PC-9 (cell line): ENCODE measurements at regions of chr15 and their contacts with region 1.

Region 1: GRCh38 chr15:42065033-42065432 is 29.3 kb downstream of the PLA2G4D start:
- DNase-seq: no peak
- H3K4me3 ChIP-seq: no peak overlapping the region
- H3K27ac ChIP-seq: no peak overlapping the region
- H3K4me1 ChIP-seq: no peaks in the 10 kb centered on the region
- H3K27me3 ChIP-seq: no peaks in the 10 kb centered on the region
- CTCF ChIP-seq: no peak

Region 2: GRCh38 chr15:41465822-41466421 is 599.1 kb before region 1 on chr15:
- CTCF ChIA-PET with region 1: interaction called, 15 read pairs
- POLR2A ChIA-PET with region 1: no interaction called
- intact Hi-C with region 1: no loop called
- DNase-seq: no peak
- H3K4me3 ChIP-seq: no peak overlapping the region
- H3K27ac ChIP-seq: no peak overlapping the region
- H3K4me1 ChIP-seq: no peaks in the 10 kb centered on the region
- H3K27me3 ChIP-seq: no peaks in the 10 kb centered on the region
- CTCF ChIP-seq: peak; percentile 82

Region 3: GRCh38 chr15:41683955-41684354 is 381.1 kb before region 1 on chr15:
- CTCF ChIA-PET with region 1: no interaction called
- POLR2A ChIA-PET with region 1: no interaction called
- intact Hi-C with region 1: no loop called
- DNase-seq: no peak
- H3K4me3 ChIP-seq: no peak overlapping the region
- H3K27ac ChIP-seq: no peak overlapping the region
- H3K4me1 ChIP-seq: no peaks in the 10 kb centered on the region
- H3K27me3 ChIP-seq: no peaks in the 10 kb centered on the region
- CTCF ChIP-seq: no peak

Region 4: DNA sequence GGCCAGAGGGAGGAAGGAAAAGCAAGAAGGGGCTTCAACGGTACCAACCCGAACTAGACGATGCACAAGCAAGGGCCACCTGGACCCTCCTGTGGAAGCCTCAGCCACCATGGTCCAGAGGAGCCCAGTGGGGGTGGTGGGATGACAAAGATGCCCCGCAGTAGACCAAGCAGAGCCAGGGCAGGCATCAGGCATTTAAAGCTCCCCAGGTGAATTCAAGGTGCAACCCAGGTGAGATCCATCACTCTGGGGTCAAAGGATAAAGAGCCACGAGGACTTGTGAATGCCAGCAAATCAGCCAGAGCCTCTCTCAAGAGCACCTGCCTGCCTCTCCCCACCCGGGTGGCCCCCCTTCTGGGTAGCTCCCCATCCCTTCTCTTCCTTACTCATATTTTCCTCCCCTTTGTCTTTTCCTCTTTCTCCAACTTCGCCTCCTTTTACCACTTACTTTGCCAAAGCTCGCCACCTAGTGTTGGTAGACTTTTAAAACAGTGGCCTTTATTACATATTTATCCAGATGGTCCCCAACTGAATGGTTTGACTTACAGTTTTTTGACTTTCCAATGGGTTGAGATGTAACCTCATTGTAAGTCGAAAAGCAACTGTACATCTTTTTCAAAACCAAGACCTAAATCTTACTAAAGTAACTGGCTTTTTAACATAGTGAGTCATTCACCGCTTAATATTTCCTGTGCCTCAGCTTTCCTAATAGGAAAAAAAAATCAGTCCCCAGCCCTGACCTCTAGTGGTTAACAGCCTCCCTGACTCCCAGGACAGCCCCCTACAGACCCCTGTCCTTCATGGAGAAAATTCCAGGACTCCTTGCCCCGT is 72.6 kb after region 1 on chr15:
- CTCF ChIA-PET with region 1: interaction called, 12 read pairs
- POLR2A ChIA-PET with region 1: no interaction called
- intact Hi-C with region 1: loop called (anchors 1 kb)
- DNase-seq: no peak
- H3K4me3 ChIP-seq: no peak overlapping the region
- H3K27ac ChIP-seq: no peak overlapping the region
- H3K4me1 ChIP-seq: 0 out of 2 replicates have a peak, but pooled peaks cover under 1% of the 10 kb centered on the region
- H3K27me3 ChIP-seq: no peaks in the 10 kb centered on the region
- CTCF ChIP-seq: peak; percentile 70

Region 5: DNA sequence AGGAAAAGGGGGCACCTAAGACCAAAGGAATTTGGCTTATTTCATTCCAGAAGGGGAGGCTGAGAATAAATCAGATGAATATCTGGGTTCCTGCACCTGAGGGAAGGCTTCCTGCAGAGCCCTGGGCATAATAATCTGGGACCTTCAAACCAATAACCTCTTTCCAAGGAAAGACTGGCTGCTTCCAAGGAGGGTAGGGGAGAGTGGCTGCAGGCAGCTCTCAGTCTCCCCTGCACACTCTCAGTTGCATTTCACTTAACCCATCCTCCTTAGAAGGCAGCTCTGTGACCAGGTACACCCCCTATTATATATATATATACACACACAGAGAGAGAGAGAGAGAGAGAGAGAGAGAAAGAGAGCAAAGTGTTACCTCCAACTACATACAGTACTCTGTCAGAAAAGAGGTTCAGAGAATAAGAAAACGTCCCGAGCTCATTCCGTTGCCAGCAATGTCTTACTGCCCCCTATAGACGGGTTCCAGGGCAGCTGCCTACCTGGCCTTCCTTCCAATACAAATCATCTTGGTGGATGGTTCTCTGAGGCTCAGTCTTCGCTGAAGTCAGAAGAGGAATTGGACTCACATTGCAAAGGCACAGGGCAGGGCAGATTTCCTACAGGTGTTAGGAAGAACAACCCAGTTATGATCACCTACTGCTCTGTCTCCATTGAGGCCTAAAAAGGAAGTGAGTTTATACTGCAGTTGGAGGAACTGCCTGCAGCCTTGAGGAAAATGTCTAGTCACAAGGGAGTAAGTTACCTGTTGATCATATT is 320.4 kb after region 1 on chr15:
- CTCF ChIA-PET with region 1: no interaction called
- POLR2A ChIA-PET with region 1: no interaction called
- intact Hi-C with region 1: loop called (anchors 2 kb)
- DNase-seq: peak in 1 of 2 experiments; percentile 44
- H3K4me3 ChIP-seq: no peak overlapping the region
- H3K27ac ChIP-seq: no peak overlapping the region
- H3K4me1 ChIP-seq: no peaks in the 10 kb centered on the region
- H3K27me3 ChIP-seq: no peaks in the 10 kb centered on the region; the same call in 1 of the 2 replicates
- CTCF ChIP-seq: peak; percentile 75

Region 6: DNA sequence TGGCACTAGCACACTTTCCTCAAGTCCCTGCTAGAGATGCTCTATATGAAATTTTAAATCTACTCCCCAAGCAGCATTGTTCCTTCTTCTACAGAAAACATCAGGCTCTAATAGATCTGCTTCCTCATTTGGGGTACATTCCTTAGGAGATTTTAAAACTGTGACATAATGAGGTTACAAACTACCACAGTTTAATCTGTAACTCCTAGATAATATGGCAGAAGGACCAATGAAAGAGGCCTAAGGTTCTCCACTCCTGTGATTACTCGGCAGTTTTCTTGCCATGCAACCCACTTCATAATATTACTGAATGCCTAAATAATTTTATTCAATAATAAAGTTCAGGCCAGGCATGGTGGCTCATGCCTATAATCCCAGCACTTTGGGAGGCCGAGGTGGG is 409.8 kb after region 1 on chr15:
- CTCF ChIA-PET with region 1: no interaction called
- POLR2A ChIA-PET with region 1: no interaction called
- intact Hi-C with region 1: loop called (anchors 5 kb)
- DNase-seq: no peak
- H3K4me3 ChIP-seq: no peak overlapping the region
- H3K27ac ChIP-seq: no peak overlapping the region
- H3K4me1 ChIP-seq: no peaks in the 10 kb centered on the region
- H3K27me3 ChIP-seq: no peaks in the 10 kb centered on the region
- CTCF ChIP-seq: no peak

Region 7: DNA sequence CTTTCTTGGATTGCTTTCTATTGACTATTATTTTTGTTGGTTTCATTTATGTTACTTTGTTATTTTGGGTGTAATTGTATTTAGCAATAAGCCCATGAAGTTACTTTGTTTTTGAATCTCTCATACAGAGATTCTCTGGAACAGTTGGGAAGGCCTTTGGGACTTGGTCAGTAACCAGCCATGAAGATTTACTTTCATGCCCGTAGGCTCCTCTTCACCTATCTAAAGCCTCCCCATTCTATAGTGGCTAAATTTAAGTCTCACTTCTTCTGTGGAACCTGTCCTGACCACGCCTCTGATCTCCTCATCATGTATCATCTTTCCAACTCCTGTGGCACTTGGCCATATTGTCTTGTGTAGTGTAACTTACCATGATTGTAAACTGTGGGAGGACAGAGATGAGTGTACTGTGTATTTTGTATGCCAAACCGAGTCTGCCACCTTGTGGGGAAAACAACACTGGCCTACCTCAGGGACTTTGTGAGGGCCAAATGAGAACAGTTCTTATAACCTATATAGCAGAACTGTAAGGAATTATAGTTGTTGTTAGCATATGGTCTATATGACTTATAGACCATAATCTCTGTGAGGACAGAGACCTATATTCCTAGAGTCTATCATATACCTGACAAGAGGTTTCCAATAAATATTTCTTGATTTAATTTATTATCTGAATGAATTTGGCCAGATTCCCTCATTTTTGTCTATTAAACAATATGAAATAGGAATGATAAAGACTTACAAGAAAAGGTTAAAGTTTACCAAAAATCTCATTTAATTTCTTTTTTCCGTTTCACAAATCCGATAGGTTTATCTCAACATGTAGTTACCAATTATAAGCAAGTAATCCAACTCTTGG is 585.4 kb after region 1 on chr15:
- CTCF ChIA-PET with region 1: no interaction called
- POLR2A ChIA-PET with region 1: no interaction called
- intact Hi-C with region 1: loop called (anchors 2 kb)
- DNase-seq: peak in 1 of 2 experiments; percentile 52
- H3K4me3 ChIP-seq: no peak overlapping the region
- H3K27ac ChIP-seq: no peak overlapping the region
- H3K4me1 ChIP-seq: no peaks in the 10 kb centered on the region
- H3K27me3 ChIP-seq: no peaks in the 10 kb centered on the region
- CTCF ChIP-seq: peak; percentile 74